ENCODE measurements at regions of chr11 and their contacts with region 1.

Region 1: GRCh38 chr11:78079232-78080083 is at the start of gene NDUFC2:
- DNase-seq: peak; percentile 58
- ATAC-seq: peak; percentile 90
- H3K4me3 ChIP-seq: peak within 1 kb of the TSS; percentile 86 to 96 (median 88)
- H3K27ac ChIP-seq: peak within 1 kb of the TSS; percentile 87
- H3K4me1 ChIP-seq: peaks cover 55% of the 10 kb centered on the region
- H3K27me3 ChIP-seq: no peaks in the 10 kb centered on the region; a peak in 1 of 5 replicates
- CTCF ChIP-seq: no peak
- EP300 ChIP-seq: peak; percentile 46 to 55; a peak in 3 of 4 replicates
- POLR2A ChIP-seq: peak; percentile 83 to 90
- RAD21 ChIP-seq: peak; percentile 66
- total RNA-seq, gene NDUFC2: 312 and 363 TPM in 2 replicates

Region 2: DNA sequence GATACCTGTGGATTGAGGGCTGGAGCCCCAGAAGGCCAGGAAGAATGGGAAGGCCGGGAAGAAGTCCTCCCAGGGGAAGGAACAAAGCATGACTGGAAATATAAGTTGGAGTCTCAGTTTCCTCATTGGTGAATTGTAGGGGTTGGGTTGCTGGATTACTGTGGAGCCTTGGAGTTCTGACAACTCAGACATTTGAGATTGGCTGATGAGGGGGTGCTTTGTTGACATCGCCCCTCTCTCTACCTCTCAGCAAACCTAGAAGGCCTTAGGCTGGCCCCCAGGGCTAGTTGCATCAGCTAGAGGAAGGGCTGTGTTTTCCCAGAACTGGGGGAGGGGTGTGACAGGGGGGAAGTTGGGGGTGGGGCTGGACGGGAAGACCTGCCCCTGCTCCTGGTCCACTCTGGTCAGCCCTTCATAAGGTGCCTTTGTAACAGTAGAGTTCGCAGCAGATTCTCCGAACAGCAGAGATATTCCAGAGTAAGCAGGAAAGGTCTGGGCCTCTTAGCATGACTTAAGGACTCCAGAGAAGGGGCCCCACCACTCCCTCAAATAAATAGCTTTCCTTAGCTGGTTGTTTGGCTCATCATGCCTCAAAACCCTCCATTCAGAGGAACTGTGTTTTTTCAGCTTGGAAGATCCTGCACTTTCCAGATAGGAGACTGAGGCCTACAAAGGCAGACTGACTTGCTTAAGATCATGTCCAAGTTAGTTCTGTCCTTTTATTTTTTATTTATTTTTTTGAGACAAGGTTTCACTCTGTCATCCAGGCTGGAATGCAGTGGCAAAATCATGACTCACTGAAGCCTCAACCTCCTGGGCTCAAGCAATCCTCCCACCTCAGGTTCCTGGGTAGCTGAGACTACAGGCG is 28.3 kb before region 1 on chr11:
- CTCF ChIA-PET with region 1: interaction called, 3 read pairs
- POLR2A ChIA-PET with region 1: interaction called, 12 read pairs
- in situ Hi-C with region 1: no loop called
- intact Hi-C with region 1: no loop called
- DNase-seq: peak; percentile 65
- ATAC-seq: peak; percentile 41
- H3K4me3 ChIP-seq: peak overlapping the region in 2 of 3 experiments; percentile 7 to 46; a peak in 2 of 6 replicates
- H3K27ac ChIP-seq: peak overlapping the region; percentile 78
- H3K4me1 ChIP-seq: peaks cover 70% of the 10 kb centered on the region
- H3K27me3 ChIP-seq: no peaks in the 10 kb centered on the region
- CTCF ChIP-seq: no peak
- EP300 ChIP-seq: peak in 1 of 2 experiments; percentile 60; a peak in 1 of 4 replicates
- POLR2A ChIP-seq: peak in 1 of 2 experiments; percentile 68; a peak in 2 of 4 replicates
- RAD21 ChIP-seq: no peak

Region 3: GRCh38 chr11:78094250-78094649 is 14.8 kb after region 1 on chr11:
- CTCF ChIA-PET with region 1: no interaction called
- POLR2A ChIA-PET with region 1: interaction called, 37 read pairs
- in situ Hi-C with region 1: no loop called
- intact Hi-C with region 1: no loop called
- DNase-seq: no peak
- ATAC-seq: no peak
- H3K4me3 ChIP-seq: no peak overlapping the region
- H3K27ac ChIP-seq: no peak overlapping the region
- H3K4me1 ChIP-seq: peaks cover 49% of the 10 kb centered on the region
- H3K27me3 ChIP-seq: no peaks in the 10 kb centered on the region
- CTCF ChIP-seq: no peak
- EP300 ChIP-seq: no peak
- POLR2A ChIP-seq: no peak
- RAD21 ChIP-seq: no peak

Region 4: GRCh38 chr11:78188286-78189173 is 109.1 kb after region 1 on chr11 and contains the starts of genes KCTD21 and USP35:
- CTCF ChIA-PET with region 1: no interaction called
- POLR2A ChIA-PET with region 1: interaction called, 5 read pairs
- in situ Hi-C with region 1: no loop called
- intact Hi-C with region 1: loop called (anchors 5 kb)
- DNase-seq: peak; percentile 92
- ATAC-seq: peak; percentile 93
- H3K4me3 ChIP-seq: peak within 1 kb of the TSS; percentile 78 to 96 (median 86)
- H3K27ac ChIP-seq: peak within 1 kb of the TSS; percentile 47
- H3K4me1 ChIP-seq: peaks cover 78% of the 10 kb centered on the region
- H3K27me3 ChIP-seq: no peaks in the 10 kb centered on the region; a peak in 1 of 5 replicates
- CTCF ChIP-seq: peak; percentile 9; the same call in 1 of the 2 replicates
- EP300 ChIP-seq: peak in 1 of 2 experiments; percentile 19; a peak in 2 of 4 replicates
- POLR2A ChIP-seq: peak in 1 of 2 experiments; percentile 85; a peak in 2 of 4 replicates
- RAD21 ChIP-seq: 0 out of 2 replicates have a peak, but pooled peaks have one; percentile 13
- total RNA-seq, gene KCTD21: 3.1 and 3.9 TPM in 2 replicates
- total RNA-seq, gene USP35: 1.8 and 4.6 TPM in 2 replicates

Region 5: GRCh38 chr11:78202733-78203167 is 123.3 kb after region 1 on chr11:
- CTCF ChIA-PET with region 1: no interaction called
- POLR2A ChIA-PET with region 1: interaction called, 11 read pairs
- in situ Hi-C with region 1: no loop called
- intact Hi-C with region 1: no loop called
- DNase-seq: peak; percentile 95
- ATAC-seq: peak; percentile 97
- H3K4me3 ChIP-seq: peak overlapping the region in 1 of 3 experiments; percentile 21; a peak in 2 of 6 replicates
- H3K27ac ChIP-seq: peak overlapping the region; percentile 61
- H3K4me1 ChIP-seq: peaks cover 42% of the 10 kb centered on the region
- H3K27me3 ChIP-seq: no peaks in the 10 kb centered on the region
- CTCF ChIP-seq: no peak
- EP300 ChIP-seq: peak; percentile 37 to 68; a peak in 3 of 4 replicates
- POLR2A ChIP-seq: 0 out of 4 replicates have a peak, but pooled peaks of 1 of the 2 experiments have one; percentile 18
- RAD21 ChIP-seq: peak; percentile 34; the same call in 1 of the 2 replicates

Region 6: GRCh38 chr11:78406538-78407196 is 327.2 kb after region 1 on chr11:
- CTCF ChIA-PET with region 1: no interaction called
- POLR2A ChIA-PET with region 1: no interaction called
- in situ Hi-C with region 1: no loop called
- intact Hi-C with region 1: no loop called
- DNase-seq: no peak
- ATAC-seq: no peak
- H3K4me3 ChIP-seq: no peak overlapping the region
- H3K27ac ChIP-seq: no peak overlapping the region
- H3K4me1 ChIP-seq: no peaks in the 10 kb centered on the region
- H3K27me3 ChIP-seq: no peaks in the 10 kb centered on the region
- CTCF ChIP-seq: no peak
- EP300 ChIP-seq: no peak
- POLR2A ChIP-seq: no peak
- RAD21 ChIP-seq: no peak